Natural killer cell (primary cell): ENCODE measurements at regions of chr15 and their contacts with region 1.

Region 1: GRCh38 chr15:31365655-31366127 is 39.1 kb downstream of the KLF13 start:
- DNase-seq: peak; percentile 71 to 90
- ATAC-seq: peak; percentile 59 to 75 (median 63)
- H3K4me3 ChIP-seq: no peak overlapping the region
- H3K4me3 Mint-ChIP-seq: peak overlapping the region; percentile 88
- H3K27ac ChIP-seq: peak overlapping the region; percentile 87
- H3K27ac Mint-ChIP-seq: peak overlapping the region; percentile 88 to 96
- H3K4me1 ChIP-seq: peaks cover 98% of the 10 kb centered on the region
- H3K4me1 Mint-ChIP-seq: peaks cover 92 to 100% of the 10 kb centered on the region in 2 donors
- H3K27me3 ChIP-seq: no peaks in the 10 kb centered on the region
- H3K27me3 Mint-ChIP-seq: no peaks in the 10 kb centered on the region
- CTCF ChIP-seq: peak; percentile 51

Region 2: DNA sequence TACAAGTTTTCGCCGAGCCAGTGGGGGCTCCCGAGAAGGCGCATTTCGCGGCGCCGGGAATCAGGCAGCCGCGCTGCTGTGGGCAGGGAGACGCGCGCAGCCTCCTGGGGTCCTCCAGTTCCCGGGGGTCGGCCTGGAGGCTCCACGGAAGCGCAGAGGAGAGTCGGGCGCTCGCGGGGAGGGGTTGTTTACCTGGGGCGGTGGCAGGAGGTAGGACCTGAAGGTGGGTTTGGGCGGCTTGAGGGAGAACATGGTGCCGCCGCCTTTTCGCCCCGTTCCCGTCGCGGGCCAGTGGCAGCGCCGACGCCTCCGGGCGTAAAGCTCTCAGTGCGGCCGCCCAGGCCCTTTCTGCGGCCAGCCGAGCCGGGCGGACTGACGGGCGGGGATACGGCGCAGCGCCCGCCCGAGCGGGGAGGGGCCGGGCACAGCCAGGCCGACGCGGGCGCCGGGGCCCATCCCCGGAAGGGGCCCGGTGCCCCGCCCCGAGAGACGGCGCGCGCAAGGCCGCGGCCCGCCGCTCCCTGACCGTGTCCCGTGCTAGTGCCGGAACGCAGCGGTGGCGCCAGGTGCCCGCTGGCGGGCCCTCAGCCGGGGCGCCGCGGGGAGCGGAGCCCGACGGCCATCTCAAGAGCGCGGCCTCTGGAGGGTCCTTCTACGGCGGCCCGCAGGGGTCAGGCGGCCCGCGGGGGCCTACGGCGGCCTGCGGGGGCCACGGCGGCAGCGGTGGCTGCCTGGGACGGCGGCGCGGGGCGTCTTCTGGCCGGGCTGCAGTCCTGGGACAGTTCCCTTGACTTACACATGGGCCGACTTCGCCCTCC is 374.2 kb before region 1 on chr15 and contains the start of gene MTMR10:
- intact Hi-C with region 1: loop called (anchors 10 kb)
- DNase-seq: peak; percentile 82 to 83
- ATAC-seq: peak; percentile 94 to 99 (median 95)
- H3K4me3 ChIP-seq: peak within 1 kb of the TSS; percentile 70
- H3K4me3 Mint-ChIP-seq: peak within 1 kb of the TSS; percentile 98
- H3K27ac ChIP-seq: peak within 1 kb of the TSS; percentile 78
- H3K27ac Mint-ChIP-seq: peak within 1 kb of the TSS; percentile 89 to 98
- H3K4me1 ChIP-seq: peaks cover 20% of the 10 kb centered on the region
- H3K4me1 Mint-ChIP-seq: peaks cover 27 to 31% of the 10 kb centered on the region in 2 donors
- H3K27me3 ChIP-seq: no peaks in the 10 kb centered on the region
- H3K27me3 Mint-ChIP-seq: no peaks in the 10 kb centered on the region
- CTCF ChIP-seq: no peak
- total RNA-seq, gene MTMR10: 46.3 to 64.5 (median 54.2) TPM

Region 3: DNA sequence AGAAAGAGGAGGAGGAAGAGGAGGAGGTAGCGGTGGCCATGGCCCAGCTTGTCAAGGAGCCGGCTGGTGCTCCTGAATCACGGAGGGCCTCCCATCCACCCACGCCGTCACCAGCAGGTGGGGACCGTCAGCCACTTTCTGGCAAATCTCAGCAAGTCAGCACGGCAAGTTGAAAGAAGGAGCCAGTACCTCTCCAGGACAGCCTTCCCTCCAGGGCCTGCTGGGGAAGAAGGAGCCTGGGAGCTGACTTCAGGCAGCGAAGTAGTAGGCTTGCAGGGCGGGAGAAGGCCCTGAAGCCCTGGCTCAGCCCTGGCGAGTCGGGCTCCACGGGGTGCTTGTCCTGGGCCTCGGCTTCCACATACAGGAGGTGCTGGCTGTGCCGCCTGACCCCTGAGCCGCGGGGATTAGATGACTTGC is 164.9 kb before region 1 on chr15:
- intact Hi-C with region 1: no loop called
- DNase-seq: peak; percentile 29 to 82
- ATAC-seq: peak; percentile 42 to 75 (median 58)
- H3K4me3 ChIP-seq: no peak overlapping the region
- H3K4me3 Mint-ChIP-seq: no peak overlapping the region
- H3K27ac ChIP-seq: no peak overlapping the region
- H3K27ac Mint-ChIP-seq: no peak overlapping the region
- H3K4me1 ChIP-seq: peaks cover 12% of the 10 kb centered on the region
- H3K4me1 Mint-ChIP-seq: peaks cover 6 to 19% of the 10 kb centered on the region in 2 donors
- H3K27me3 ChIP-seq: no peaks in the 10 kb centered on the region
- H3K27me3 Mint-ChIP-seq: peaks cover 0 to 8% of the 10 kb centered on the region in 2 donors
- CTCF ChIP-seq: no peak

Region 4: DNA sequence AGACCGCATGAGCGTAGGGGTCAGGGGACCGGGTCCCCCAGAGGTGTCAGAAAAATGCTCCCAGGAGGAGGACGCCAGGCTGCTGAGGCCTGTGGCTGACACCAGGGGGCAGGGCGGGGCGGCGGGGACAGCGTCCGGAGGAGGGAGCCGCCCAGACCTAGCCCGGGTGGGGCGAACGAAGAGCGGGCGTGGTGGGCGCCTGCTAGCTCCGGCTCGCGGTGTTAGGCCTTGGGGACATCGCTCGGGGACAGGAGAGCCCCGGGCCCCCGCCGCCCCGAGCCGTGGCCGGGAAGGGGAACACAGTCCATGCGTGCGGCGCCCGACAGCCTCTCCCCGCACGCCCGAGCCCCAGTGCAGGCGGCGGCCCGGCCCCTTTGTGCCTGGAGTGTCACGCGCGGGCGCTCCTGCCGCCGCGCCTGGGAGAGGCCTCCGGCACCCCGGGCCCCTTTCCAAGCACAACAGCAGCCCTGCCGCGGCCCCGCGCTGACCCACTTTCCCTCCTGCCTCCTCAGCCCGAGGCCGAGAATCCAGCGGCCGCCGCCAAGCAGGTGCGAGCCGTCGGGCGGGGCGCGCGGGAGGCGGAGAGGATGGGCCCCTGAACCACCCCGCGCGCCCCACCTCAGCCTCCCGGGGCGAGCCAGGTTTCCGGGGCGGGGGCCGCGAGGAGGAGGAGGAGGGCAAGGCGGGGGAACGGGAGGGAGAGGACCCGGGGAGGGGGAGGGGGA is 150.0 kb before region 1 on chr15:
- intact Hi-C with region 1: loop called (anchors 10 kb)
- DNase-seq: peak; percentile 68 to 84
- ATAC-seq: peak; percentile 82 to 87 (median 85)
- H3K4me3 ChIP-seq: peak overlapping the region; percentile 27
- H3K4me3 Mint-ChIP-seq: peak overlapping the region; percentile 87
- H3K27ac ChIP-seq: peak overlapping the region; percentile 87
- H3K27ac Mint-ChIP-seq: peak overlapping the region; percentile 66 to 87
- H3K4me1 ChIP-seq: peaks cover 23% of the 10 kb centered on the region
- H3K4me1 Mint-ChIP-seq: peaks cover 12 to 35% of the 10 kb centered on the region in 2 donors
- H3K27me3 ChIP-seq: no peaks in the 10 kb centered on the region
- H3K27me3 Mint-ChIP-seq: no peaks in the 10 kb centered on the region
- CTCF ChIP-seq: peak; percentile 78

Region 5: GRCh38 chr15:31326156-31326732 is 39.4 kb before region 1 on chr15:
- intact Hi-C with region 1: loop called (anchors 5 kb)
- DNase-seq: peak; percentile 99 to 100
- ATAC-seq: peak; percentile 73 to 91 (median 75)
- H3K4me3 ChIP-seq: peak overlapping the region; percentile 44
- H3K4me3 Mint-ChIP-seq: peak overlapping the region; percentile 87
- H3K27ac ChIP-seq: peak overlapping the region; percentile 88
- H3K27ac Mint-ChIP-seq: peak overlapping the region; percentile 80 to 93
- H3K4me1 ChIP-seq: peaks cover 38% of the 10 kb centered on the region
- H3K4me1 Mint-ChIP-seq: peaks cover 51% of the 10 kb centered on the region in 2 donors
- H3K27me3 ChIP-seq: no peaks in the 10 kb centered on the region
- H3K27me3 Mint-ChIP-seq: no peaks in the 10 kb centered on the region
- CTCF ChIP-seq: no peak

Region 6: DNA sequence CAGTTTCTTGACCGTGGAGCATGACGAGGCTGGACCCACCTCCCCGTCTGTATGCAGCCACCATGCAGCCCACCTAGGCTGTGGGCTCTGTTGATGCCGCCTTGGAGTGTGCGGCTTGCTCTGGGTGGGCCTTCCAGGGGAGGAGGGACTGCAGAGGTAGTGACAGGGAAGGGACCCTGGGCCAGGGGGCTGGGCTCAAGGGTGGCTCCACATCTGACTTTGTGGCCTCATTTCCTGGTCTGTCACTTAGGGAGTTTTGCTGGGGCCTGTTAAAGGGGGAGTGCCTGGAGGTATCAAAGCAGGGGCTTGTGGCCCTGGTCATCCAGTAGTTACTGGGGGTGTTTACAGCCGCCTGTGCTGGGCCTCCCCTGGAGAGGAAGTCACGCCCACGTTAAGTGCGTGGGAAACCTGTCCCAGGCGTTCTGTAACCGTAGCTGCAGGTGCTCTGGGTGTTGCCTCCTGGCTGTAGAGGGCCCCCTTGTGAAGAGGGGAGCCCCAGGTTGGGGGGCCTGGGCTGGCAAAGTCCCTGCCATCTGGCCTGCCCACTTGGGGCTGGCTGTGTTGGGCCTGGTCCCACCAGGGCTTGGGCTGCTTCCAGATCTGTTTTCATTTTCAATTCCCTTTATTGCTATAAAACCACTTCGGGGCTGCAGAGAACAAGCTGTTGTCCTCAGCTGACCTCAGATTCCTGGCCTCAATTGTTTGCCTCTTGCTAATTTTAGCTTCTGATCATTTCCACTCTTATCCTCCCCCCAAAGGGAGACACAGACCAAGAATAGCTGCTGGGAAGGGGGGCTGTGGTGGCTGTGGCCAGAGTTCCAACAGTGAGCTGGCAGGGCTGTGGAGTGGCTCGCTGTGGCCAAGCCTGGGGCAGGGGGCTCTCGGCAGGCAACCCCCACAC is 12.5 kb before region 1 on chr15:
- intact Hi-C with region 1: loop called (anchors 1 kb)
- DNase-seq: peak in 1 of 2 donors; percentile 78
- ATAC-seq: peak; percentile 75 to 82 (median 79)
- H3K4me3 ChIP-seq: no peak overlapping the region
- H3K4me3 Mint-ChIP-seq: peak overlapping the region; percentile 79
- H3K27ac ChIP-seq: peak overlapping the region; percentile 88
- H3K27ac Mint-ChIP-seq: peak overlapping the region; percentile 88 to 96
- H3K4me1 ChIP-seq: peaks cover 99% of the 10 kb centered on the region
- H3K4me1 Mint-ChIP-seq: peaks cover 85 to 97% of the 10 kb centered on the region in 2 donors
- H3K27me3 ChIP-seq: no peaks in the 10 kb centered on the region
- H3K27me3 Mint-ChIP-seq: no peaks in the 10 kb centered on the region
- CTCF ChIP-seq: no peak

Region 7: GRCh38 chr15:31379042-31379441 is 13.4 kb after region 1 on chr15:
- intact Hi-C with region 1: no loop called
- DNase-seq: peak in 1 of 2 donors; percentile 43
- ATAC-seq: peak; percentile 48 to 71 (median 52)
- H3K4me3 ChIP-seq: no peak overlapping the region
- H3K4me3 Mint-ChIP-seq: peak overlapping the region; percentile 35
- H3K27ac ChIP-seq: peak overlapping the region; percentile 46
- H3K27ac Mint-ChIP-seq: peak overlapping the region; percentile 80 to 88
- H3K4me1 ChIP-seq: peaks cover 51% of the 10 kb centered on the region
- H3K4me1 Mint-ChIP-seq: peaks cover 60 to 72% of the 10 kb centered on the region in 2 donors
- H3K27me3 ChIP-seq: no peaks in the 10 kb centered on the region
- H3K27me3 Mint-ChIP-seq: no peaks in the 10 kb centered on the region
- CTCF ChIP-seq: no peak

Region 8: DNA sequence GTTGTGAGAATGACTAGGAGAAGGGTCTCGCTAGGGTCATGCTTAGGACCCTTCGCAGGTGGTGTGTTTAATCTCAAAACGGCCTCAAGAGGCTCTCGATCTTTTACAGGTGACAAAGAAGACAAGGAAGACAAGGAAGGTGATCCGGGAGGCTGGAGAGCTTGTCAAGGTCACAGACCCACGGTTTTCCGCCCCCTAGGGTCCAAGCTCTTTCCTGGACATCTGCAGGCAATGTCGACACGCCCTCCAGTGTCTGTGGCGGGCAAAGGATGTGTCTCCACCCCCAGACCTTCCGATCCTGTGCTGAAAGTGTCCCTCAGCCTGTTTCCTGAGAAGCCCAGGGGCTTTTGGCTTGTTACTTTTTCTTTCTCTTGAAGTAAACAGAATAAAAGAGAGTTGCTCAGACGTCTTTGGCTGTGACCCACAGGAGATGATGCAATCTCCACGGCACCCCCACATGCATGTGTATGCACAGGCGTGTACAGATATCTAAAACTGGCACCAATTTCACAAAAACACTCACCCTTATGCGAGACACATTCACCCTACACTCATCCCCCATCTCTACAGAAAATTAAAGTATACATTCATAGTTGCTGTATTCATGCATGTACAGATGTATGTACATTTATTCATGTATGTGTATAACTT is 69.7 kb after region 1 on chr15:
- intact Hi-C with region 1: loop called (anchors 1 kb)
- DNase-seq: peak; percentile 73 to 94
- ATAC-seq: peak; percentile 70 to 87 (median 75)
- H3K4me3 ChIP-seq: peak overlapping the region; percentile 41
- H3K4me3 Mint-ChIP-seq: peak overlapping the region; percentile 88
- H3K27ac ChIP-seq: peak overlapping the region; percentile 95
- H3K27ac Mint-ChIP-seq: peak overlapping the region; percentile 98 to 100
- H3K4me1 ChIP-seq: peaks cover 78% of the 10 kb centered on the region
- H3K4me1 Mint-ChIP-seq: peaks cover 59 to 77% of the 10 kb centered on the region in 2 donors
- H3K27me3 ChIP-seq: no peaks in the 10 kb centered on the region
- H3K27me3 Mint-ChIP-seq: no peaks in the 10 kb centered on the region
- CTCF ChIP-seq: no peak

Region 9: GRCh38 chr15:31488426-31489204 is 122.9 kb after region 1 on chr15:
- intact Hi-C with region 1: loop called (anchors 2 kb)
- DNase-seq: peak; percentile 30 to 90
- ATAC-seq: peak; percentile 63 to 78 (median 65)
- H3K4me3 ChIP-seq: no peak overlapping the region
- H3K4me3 Mint-ChIP-seq: no peak overlapping the region
- H3K27ac ChIP-seq: no peak overlapping the region
- H3K27ac Mint-ChIP-seq: peak overlapping the region in 1 of 2 donors; percentile 56
- H3K4me1 ChIP-seq: peaks cover 31% of the 10 kb centered on the region
- H3K4me1 Mint-ChIP-seq: peaks cover 22 to 28% of the 10 kb centered on the region in 2 donors
- H3K27me3 ChIP-seq: no peaks in the 10 kb centered on the region
- H3K27me3 Mint-ChIP-seq: peaks cover 0 to 3% of the 10 kb centered on the region in 2 donors
- CTCF ChIP-seq: peak; percentile 91